Naive thymus-derived CD8-positive, alpha-beta T cell (primary cell): ENCODE measurements at regions of chr6 and their contacts with region 1.

Region 1: DNA sequence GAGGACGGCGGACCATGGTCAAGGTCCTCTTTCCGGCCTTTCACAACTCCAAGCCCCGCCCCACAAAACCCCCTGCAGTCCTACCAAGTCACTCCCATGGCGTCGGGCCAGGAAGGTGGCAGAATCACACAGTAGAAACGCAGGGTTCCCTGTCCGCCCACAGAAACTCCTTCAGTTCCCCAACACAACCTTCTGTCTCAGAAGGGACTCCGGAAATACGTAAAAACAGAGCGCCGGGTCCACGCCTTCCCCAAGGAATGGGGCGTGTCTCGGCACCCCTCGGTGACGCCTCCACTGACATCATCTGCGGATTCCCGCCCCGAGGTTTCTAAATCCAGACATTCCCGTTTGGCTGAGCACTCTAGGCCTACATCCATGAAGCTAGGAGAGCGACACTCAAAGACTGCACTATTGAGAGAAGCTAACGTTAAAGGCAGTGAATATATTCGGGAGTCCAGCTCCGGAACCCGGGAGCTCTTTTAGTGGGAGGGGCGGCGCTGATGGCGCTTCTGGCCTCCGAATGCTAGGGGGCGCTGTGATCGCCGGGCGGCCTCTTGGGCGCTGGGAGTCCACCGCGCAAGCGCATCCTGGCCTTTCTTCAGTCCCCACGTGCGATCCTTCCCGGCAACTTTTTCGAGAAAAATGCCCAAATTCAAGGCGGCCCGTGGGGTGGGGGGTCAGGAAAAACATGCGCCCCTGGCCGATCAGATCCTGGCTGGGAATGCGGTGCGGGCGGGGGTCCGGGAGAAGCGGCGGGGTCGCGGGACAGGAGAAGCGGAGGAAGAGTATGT is at the starts of genes BYSL and MED20:
- DNase-seq: peak; percentile 89 to 98 (median 94)
- ATAC-seq: peak; percentile 86 to 91
- H3K4me3 Mint-ChIP-seq: peak within 1 kb of the TSS; percentile 97 to 100 (median 100)
- H3K27ac Mint-ChIP-seq: peak within 1 kb of the TSS; percentile 97 to 100 (median 99)
- H3K4me1 Mint-ChIP-seq: peaks cover 37 to 58% (median 54%) of the 10 kb centered on the region in 4 donors
- H3K27me3 Mint-ChIP-seq: peaks cover 0 to 4% (median 0%) of the 10 kb centered on the region in 5 donors
- polyA plus RNA-seq, gene BYSL: 3.5 to 7.5 (median 4.9) TPM
- polyA plus RNA-seq, gene MED20: 2.8 to 5.1 (median 4.3) TPM

Region 2: GRCh38 chr6:41787219-41787917 is 133.7 kb before region 1 on chr6 and contains the start of gene TOMM6:
- POLR2A ChIA-PET with region 1: interaction called, 32 read pairs
- DNase-seq: peak; percentile 90 to 97 (median 95)
- ATAC-seq: peak; percentile 80
- H3K4me3 Mint-ChIP-seq: peak within 1 kb of the TSS; percentile 89 to 97 (median 94)
- H3K27ac Mint-ChIP-seq: peak within 1 kb of the TSS; percentile 92 to 98 (median 96)
- H3K4me1 Mint-ChIP-seq: peaks cover 2 to 28% (median 13%) of the 10 kb centered on the region in 4 donors
- H3K27me3 Mint-ChIP-seq: peaks cover 0 to 4% (median 0%) of the 10 kb centered on the region in 5 donors
- polyA plus RNA-seq, gene TOMM6: 433 to 440 (median 433) TPM

Region 3: DNA sequence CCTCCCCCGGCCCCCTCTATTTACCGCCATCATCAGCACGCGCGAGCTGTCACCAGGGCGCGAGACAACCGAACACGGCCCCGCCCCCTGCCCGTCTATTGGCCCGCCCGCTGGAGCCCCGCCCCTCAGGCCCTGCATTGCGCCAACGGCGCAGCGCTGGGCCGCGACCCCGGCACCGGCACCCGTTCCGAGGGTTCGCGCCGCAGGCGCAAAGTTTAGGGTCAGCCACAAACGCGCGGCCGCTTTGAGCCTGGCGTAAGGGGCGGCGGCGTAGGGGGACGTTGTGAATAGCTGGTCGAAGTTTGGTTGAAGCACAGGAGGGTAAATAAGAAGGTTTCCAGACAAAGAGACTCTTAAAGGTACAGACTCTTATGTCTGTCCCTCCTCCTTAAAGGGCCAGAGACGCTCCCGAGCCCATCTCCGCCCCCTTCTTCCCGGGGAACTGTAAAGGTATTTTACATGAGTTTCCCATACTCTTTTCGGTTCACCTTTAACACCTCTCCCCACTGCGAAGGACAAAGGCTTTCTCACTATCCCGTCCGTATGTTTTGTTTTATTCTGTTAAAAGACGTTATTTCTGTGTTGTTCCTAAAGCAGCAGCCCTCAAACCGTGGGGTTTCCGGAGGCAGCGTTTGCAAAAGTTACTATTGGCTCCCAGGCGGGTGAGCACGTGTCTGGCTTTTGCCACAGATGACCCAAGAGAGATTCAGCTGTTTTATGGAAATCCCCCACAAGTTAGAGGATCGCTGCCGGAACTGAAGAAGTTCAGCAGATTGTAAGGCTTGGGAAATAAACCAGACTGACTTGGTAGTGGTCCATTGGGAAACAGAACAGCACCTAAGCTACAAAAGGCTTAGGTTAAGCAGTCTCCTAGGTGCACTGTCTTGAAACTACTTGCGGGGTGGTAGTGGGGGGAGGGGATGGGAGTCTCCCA is 25.5 kb before region 1 on chr6 and contains the start of gene USP49:
- POLR2A ChIA-PET with region 1: interaction called, 18 read pairs
- DNase-seq: peak; percentile 81 to 95 (median 90)
- ATAC-seq: peak; percentile 91 to 92
- H3K4me3 Mint-ChIP-seq: no peak within 1 kb of the TSS
- H3K27ac Mint-ChIP-seq: peak within 1 kb of the TSS in 9 of 10 donors; percentile 73 to 96 (median 90)
- H3K4me1 Mint-ChIP-seq: peaks cover 0 to 11% (median 9%) of the 10 kb centered on the region in 4 donors
- H3K27me3 Mint-ChIP-seq: no peaks in the 10 kb centered on the region
- polyA plus RNA-seq, gene USP49: 0.34 to 0.48 (median 0.42) TPM

Region 4: DNA sequence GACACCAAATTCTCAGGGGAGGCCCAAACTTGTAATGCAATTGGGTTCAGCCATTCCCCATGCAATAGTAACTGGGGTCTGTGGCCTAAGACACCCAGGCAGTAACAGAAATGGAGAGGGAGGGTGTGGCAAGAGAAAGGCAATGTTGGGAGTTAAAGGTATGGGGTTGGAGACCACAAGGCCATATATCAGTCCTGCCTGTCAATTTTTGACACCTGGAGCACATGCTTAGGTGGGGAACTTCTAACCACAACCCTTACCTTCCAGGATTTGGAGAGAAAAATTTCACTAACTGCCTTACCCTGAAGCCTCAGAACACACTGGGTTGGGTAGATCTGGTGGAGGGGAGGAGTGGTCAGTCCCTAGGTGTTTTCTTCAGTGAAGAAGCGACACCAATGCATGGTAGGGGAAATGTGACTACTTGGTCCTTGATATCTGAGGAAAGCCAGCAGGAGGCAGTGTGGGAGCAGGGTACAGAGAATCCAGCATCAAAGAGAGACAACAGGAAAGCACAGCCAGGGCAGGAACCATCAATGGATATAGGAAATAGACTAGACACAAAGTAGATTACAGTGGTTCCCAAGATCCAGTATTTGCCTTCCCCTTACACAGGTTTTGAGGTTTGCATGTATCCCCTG is 19.1 kb before region 1 on chr6:
- POLR2A ChIA-PET with region 1: interaction called, 18 read pairs
- DNase-seq: peak; percentile 23 to 74 (median 52)
- ATAC-seq: peak; percentile 54 to 67
- H3K4me3 Mint-ChIP-seq: no peak overlapping the region
- H3K27ac Mint-ChIP-seq: peak overlapping the region in 4 of 10 donors; percentile 22 to 68 (median 48)
- H3K4me1 Mint-ChIP-seq: peaks cover 14 to 20% (median 17%) of the 10 kb centered on the region in 4 donors
- H3K27me3 Mint-ChIP-seq: no peaks in the 10 kb centered on the region

Region 5: GRCh38 chr6:41936073-41936837 is 15.1 kb after region 1 on chr6:
- POLR2A ChIA-PET with region 1: interaction called, 24 read pairs
- DNase-seq: peak; percentile 26 to 81 (median 63)
- ATAC-seq: peak; percentile 46 to 65
- H3K4me3 Mint-ChIP-seq: peak overlapping the region; percentile 59 to 95 (median 79)
- H3K27ac Mint-ChIP-seq: peak overlapping the region; percentile 82 to 94 (median 92)
- H3K4me1 Mint-ChIP-seq: peaks cover 55 to 85% (median 77%) of the 10 kb centered on the region in 4 donors
- H3K27me3 Mint-ChIP-seq: no peaks in the 10 kb centered on the region

Region 6: DNA sequence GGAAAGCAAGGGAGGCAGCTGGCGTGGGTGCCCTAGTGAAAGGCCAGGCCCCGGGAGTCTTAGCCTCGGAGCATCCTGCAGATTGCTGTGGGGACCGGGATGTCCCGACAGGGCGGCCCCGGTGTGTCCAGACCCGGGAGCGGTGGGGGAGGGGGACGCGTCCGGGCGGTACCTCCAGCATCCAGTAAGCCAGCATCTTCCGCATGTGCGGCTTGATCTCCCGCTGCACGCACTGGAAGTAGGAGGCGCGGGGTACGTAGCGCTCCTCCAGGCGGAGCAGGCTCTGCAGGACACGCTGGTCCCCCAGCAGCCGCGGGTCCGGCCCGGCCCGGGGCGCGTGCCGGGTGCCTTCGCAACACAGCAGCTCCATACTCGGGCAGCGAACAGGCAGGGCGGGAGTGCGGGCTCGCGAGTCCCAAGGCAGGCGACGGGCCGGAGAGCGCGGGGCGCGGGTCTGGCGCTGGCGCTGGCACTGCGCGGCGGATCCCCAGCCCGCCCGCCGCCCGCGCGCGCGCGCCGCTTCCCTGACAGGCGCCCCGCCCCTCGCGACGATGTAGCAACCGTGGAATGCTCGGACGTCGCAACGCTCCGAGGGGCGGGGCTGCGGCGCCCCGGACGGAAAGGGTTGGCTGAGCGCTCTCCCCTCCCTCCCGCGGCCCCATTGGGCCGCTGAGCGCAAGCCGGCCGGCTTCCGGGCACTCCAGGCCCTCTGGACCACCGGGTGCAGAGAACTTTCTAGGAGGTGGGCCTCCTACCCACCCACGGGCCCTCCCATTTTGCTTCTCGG is 20.4 kb after region 1 on chr6 and contains the start of gene CCND3:
- POLR2A ChIA-PET with region 1: interaction called, 24 read pairs
- DNase-seq: peak; percentile 66 to 89 (median 77)
- ATAC-seq: peak; percentile 67 to 71
- H3K4me3 Mint-ChIP-seq: peak within 1 kb of the TSS; percentile 87 to 96 (median 92)
- H3K27ac Mint-ChIP-seq: peak within 1 kb of the TSS; percentile 89 to 99 (median 94)
- H3K4me1 Mint-ChIP-seq: peaks cover 43 to 79% (median 75%) of the 10 kb centered on the region in 4 donors
- H3K27me3 Mint-ChIP-seq: no peaks in the 10 kb centered on the region
- polyA plus RNA-seq, gene CCND3: 519 to 765 (median 628) TPM

Region 7: GRCh38 chr6:41986339-41986738 is 65.2 kb after region 1 on chr6:
- POLR2A ChIA-PET with region 1: no interaction called
- DNase-seq: no peak
- ATAC-seq: no peak
- H3K4me3 Mint-ChIP-seq: no peak overlapping the region
- H3K27ac Mint-ChIP-seq: peak overlapping the region in 6 of 10 donors; percentile 5 to 90 (median 34)
- H3K4me1 Mint-ChIP-seq: peaks cover 31 to 78% (median 68%) of the 10 kb centered on the region in 4 donors
- H3K27me3 Mint-ChIP-seq: no peaks in the 10 kb centered on the region